MCF 10A (cell line): ENCODE measurements at regions of chrX and their contacts with region 1.

Region 1: GRCh38 chrX:130726661-130727060 is 176.3 kb downstream of the ENOX2 start:
- DNase-seq: peak; percentile 60
- H3K4me3 Mint-ChIP-seq: no peak overlapping the region
- H3K27ac Mint-ChIP-seq: peak overlapping the region; percentile 80
- H3K4me1 Mint-ChIP-seq: peaks cover 6% of the 10 kb centered on the region
- H3K27me3 Mint-ChIP-seq: peaks cover 13% of the 10 kb centered on the region
- CTCF ChIP-seq: no peak

Region 2: DNA sequence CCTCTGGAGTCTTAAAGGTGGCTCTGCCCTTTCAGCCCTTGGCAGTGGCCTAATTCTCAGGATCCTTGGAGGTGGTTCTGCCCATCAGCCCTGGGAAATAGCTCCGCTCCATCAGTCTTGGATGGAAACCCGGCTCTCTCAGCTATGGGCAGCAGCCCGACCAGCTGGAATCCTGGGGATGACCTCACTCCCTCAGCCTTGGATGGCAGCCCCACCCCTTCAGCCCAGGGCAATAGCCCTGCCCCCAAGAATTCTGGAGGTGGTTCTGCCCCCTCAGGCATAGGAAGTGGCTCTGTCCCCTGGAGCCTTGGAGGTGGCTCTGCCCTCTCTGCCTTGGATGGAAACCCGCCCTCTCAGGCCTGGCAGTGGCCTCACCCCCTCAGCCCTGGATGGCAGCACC is 197.1 kb before region 1 on chrX:
- CTCF ChIA-PET with region 1: no interaction called
- POLR2A ChIA-PET with region 1: no interaction called
- intact Hi-C with region 1: no loop called
- DNase-seq: no peak
- H3K4me3 Mint-ChIP-seq: no peak overlapping the region
- H3K27ac Mint-ChIP-seq: no peak overlapping the region
- H3K4me1 Mint-ChIP-seq: no peaks in the 10 kb centered on the region
- H3K27me3 Mint-ChIP-seq: peaks cover 25% of the 10 kb centered on the region
- CTCF ChIP-seq: no peak

Region 3: DNA sequence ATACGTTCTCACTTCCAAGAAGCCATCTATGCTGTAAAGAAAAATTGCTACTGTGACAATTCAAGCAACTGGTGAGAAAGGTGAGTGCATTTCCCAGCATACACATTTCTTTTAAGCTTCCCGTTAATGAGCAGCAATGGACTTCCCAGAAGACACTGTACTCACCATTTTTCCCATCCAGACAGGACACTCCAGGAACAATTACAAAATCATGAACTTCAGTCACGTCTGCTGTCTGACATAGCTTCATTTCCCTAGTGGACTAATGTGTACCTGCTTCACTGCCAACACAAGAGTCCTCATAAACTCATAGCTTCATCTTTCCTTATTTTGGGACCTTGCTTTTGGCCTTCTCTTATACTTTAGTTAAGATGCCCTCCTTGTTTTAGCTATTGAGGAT is 19.4 kb after region 1 on chrX:
- CTCF ChIA-PET with region 1: no interaction called
- POLR2A ChIA-PET with region 1: no interaction called
- intact Hi-C with region 1: no loop called
- DNase-seq: no peak
- H3K4me3 Mint-ChIP-seq: no peak overlapping the region
- H3K27ac Mint-ChIP-seq: no peak overlapping the region
- H3K4me1 Mint-ChIP-seq: no peaks in the 10 kb centered on the region
- H3K27me3 Mint-ChIP-seq: peaks cover 13% of the 10 kb centered on the region
- CTCF ChIP-seq: no peak

Region 4: GRCh38 chrX:130902783-130903613 is 176.3 kb after region 1 on chrX and contains the start of gene ENOX2:
- CTCF ChIA-PET with region 1: no interaction called
- POLR2A ChIA-PET with region 1: no interaction called
- intact Hi-C with region 1: loop called (anchors 5 kb)
- DNase-seq: peak; percentile 94
- H3K4me3 Mint-ChIP-seq: no peak within 1 kb of the TSS
- H3K27ac Mint-ChIP-seq: no peak within 1 kb of the TSS
- H3K4me1 Mint-ChIP-seq: peaks cover 8% of the 10 kb centered on the region
- H3K27me3 Mint-ChIP-seq: peaks cover 42% of the 10 kb centered on the region
- CTCF ChIP-seq: no peak
- total RNA-seq, gene ENOX2: 24.3 and 32.7 TPM in 2 replicates